ENCODE measurements at regions of chr10 and their contacts with region 1.

Region 1: GRCh38 chr10:103584216-103585010 is 90.9 kb downstream of the NEURL1 start:
- DNase-seq: peak; percentile 49
- H3K4me3 Mint-ChIP-seq: peak overlapping the region; percentile 81
- H3K27ac Mint-ChIP-seq: peak overlapping the region; percentile 51
- H3K4me1 Mint-ChIP-seq: peaks cover 4% of the 10 kb centered on the region
- H3K27me3 Mint-ChIP-seq: peaks cover 13% of the 10 kb centered on the region

Region 2: DNA sequence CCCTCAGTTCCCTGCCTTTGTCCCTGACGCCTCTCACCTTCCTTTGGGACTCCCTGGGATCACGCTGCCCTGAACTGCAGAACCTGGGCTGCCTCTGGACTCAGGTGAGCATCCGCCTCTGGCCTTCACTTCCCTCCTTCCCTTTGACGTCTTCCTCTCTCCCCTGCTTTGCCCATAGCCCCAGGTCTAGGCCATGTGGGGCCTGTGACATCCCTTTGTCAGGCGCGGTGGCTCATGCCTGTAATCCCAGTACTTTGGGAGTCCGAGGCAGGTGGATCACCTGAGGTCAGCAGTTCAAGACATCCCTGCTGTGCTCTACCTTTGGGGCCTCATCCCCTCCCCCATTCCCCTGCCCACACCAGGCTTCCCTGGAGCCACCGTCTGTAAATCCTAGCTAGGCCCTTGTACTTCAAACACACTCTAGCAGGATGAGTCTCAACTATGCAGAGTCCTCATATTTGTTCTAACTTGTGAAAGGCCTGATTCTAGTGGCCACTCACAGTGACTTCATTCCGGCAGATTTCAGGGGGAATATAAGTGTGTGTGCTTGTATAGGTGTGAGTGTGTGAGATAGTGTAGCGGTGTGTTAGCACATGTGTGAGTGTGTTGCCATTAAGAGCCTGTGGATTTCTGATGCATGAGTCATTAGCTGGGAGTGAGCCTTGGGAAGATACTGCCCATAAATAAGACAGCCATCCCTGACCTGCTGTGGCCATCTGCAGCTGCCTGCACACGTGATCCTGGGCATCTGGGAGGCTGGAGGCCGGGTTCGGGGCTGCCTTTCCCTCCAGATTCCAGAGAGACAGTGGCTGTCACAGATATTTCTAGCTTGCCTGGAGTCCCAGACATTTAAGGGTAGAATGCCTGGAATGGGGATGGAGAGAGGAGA is 92.7 kb before region 1 on chr10:
- intact Hi-C with region 1: loop called (anchors 5 kb)
- DNase-seq: no peak
- H3K4me3 Mint-ChIP-seq: peak overlapping the region; percentile 10
- H3K27ac Mint-ChIP-seq: no peak overlapping the region
- H3K4me1 Mint-ChIP-seq: peaks cover 15% of the 10 kb centered on the region
- H3K27me3 Mint-ChIP-seq: peaks cover 43% of the 10 kb centered on the region

Region 3: GRCh38 chr10:103605359-103606095 is 21.1 kb after region 1 on chr10:
- intact Hi-C with region 1: no loop called
- DNase-seq: peak; percentile 19
- H3K4me3 Mint-ChIP-seq: no peak overlapping the region
- H3K27ac Mint-ChIP-seq: no peak overlapping the region
- H3K4me1 Mint-ChIP-seq: no peaks in the 10 kb centered on the region
- H3K27me3 Mint-ChIP-seq: no peaks in the 10 kb centered on the region